K562 (cell line): ENCODE measurements at regions of chr11 and their contacts with region 1.

Region 1: GRCh38 chr11:75100314-75100713 is 3.6 kb upstream of the OR2AT4 start:
- DNase-seq: peak; percentile 62 to 90 (median 69)
- ATAC-seq: peak; percentile 78
- H3K4me3 ChIP-seq: peak overlapping the region; percentile 40
- H3K27ac ChIP-seq: peak overlapping the region; percentile 89
- H3K4me1 ChIP-seq: peaks cover 30 to 36% of the 10 kb centered on the region in 2 experiments; a peak in 4 of 5 replicates
- H3K27me3 ChIP-seq: no peaks in the 10 kb centered on the region
- CTCF ChIP-seq: no peak
- EP300 ChIP-seq: peak; percentile 73
- POLR2A ChIP-seq: peak; percentile 60
- RAD21 ChIP-seq: peak in 1 of 2 experiments; percentile 17; a peak in 2 of 4 replicates

Region 2: GRCh38 chr11:74860743-74861142 is 239.6 kb before region 1 on chr11:
- CTCF ChIA-PET with region 1: no interaction called
- POLR2A ChIA-PET with region 1: no interaction called
- in situ Hi-C with region 1: no loop called
- intact Hi-C with region 1: no loop called
- DNase-seq: no peak
- ATAC-seq: no peak
- H3K4me3 ChIP-seq: no peak overlapping the region
- H3K27ac ChIP-seq: no peak overlapping the region
- H3K4me1 ChIP-seq: no peaks in the 10 kb centered on the region
- H3K27me3 ChIP-seq: no peaks in the 10 kb centered on the region
- CTCF ChIP-seq: no peak
- EP300 ChIP-seq: no peak
- POLR2A ChIP-seq: no peak
- RAD21 ChIP-seq: no peak

Region 3: DNA sequence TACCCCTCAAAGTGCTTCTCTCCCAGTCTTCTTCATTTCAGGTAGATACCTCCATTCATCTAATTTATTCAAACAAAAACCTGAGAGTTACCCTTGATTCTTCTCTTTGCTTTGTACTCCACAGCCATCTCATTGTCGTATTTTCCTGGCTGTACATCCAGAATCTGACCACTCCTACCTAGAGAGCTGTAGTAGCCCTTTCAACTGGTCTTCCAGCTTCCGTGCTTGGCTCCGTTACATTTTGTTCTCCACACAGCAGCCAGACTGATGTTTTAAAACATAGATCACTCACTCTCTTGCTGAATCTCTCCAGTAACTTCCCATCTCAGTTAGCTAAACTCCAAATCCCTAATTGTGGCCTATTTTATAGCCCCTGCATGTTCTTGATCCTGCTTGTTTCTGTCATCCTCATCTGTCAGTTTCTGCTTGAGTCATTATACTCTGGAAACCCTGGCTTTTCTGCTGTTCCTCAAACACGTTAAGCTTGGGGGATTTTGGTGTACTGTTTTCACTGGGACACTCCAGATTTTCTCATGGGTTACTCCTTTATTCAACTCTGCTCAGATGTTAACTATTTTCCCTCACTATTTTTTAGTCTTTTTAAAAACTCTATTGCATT is 143.8 kb before region 1 on chr11:
- CTCF ChIA-PET with region 1: no interaction called
- POLR2A ChIA-PET with region 1: no interaction called
- in situ Hi-C with region 1: no loop called
- intact Hi-C with region 1: no loop called
- DNase-seq: no peak
- ATAC-seq: no peak
- H3K4me3 ChIP-seq: no peak overlapping the region
- H3K27ac ChIP-seq: peak overlapping the region; percentile 16; the same call in 2 of the 3 replicates
- H3K4me1 ChIP-seq: peaks cover 7 to 31% of the 10 kb centered on the region in 2 experiments; a peak in 3 of 5 replicates
- H3K27me3 ChIP-seq: no peaks in the 10 kb centered on the region
- CTCF ChIP-seq: no peak
- EP300 ChIP-seq: no peak
- POLR2A ChIP-seq: no peak
- RAD21 ChIP-seq: no peak

Region 4: GRCh38 chr11:75031771-75032549 is 68.4 kb before region 1 on chr11:
- CTCF ChIA-PET with region 1: interaction called, 4 read pairs
- POLR2A ChIA-PET with region 1: interaction called, 3 read pairs
- in situ Hi-C with region 1: no loop called
- intact Hi-C with region 1: loop called (anchors 2 kb)
- DNase-seq: peak; percentile 76 to 91 (median 80)
- ATAC-seq: peak; percentile 82
- H3K4me3 ChIP-seq: no peak overlapping the region
- H3K27ac ChIP-seq: peak overlapping the region; percentile 75
- H3K4me1 ChIP-seq: peaks cover 29 to 51% of the 10 kb centered on the region in 2 experiments
- H3K27me3 ChIP-seq: no peaks in the 10 kb centered on the region
- CTCF ChIP-seq: peak; percentile 79 to 87 (median 80)
- EP300 ChIP-seq: no peak
- POLR2A ChIP-seq: no peak
- RAD21 ChIP-seq: peak in 1 of 2 experiments; percentile 83; a peak in 3 of 4 replicates

Region 5: GRCh38 chr11:75142714-75143419 is 42.6 kb after region 1 on chr11:
- CTCF ChIA-PET with region 1: no interaction called
- POLR2A ChIA-PET with region 1: interaction called, 3 read pairs
- in situ Hi-C with region 1: no loop called
- intact Hi-C with region 1: loop called (anchors 5 kb)
- DNase-seq: peak; percentile 84 to 91 (median 88)
- ATAC-seq: peak; percentile 86
- H3K4me3 ChIP-seq: no peak overlapping the region
- H3K27ac ChIP-seq: peak overlapping the region; percentile 33; the same call in 1 of the 3 replicates
- H3K4me1 ChIP-seq: peaks cover 22 to 32% of the 10 kb centered on the region in 2 experiments
- H3K27me3 ChIP-seq: no peaks in the 10 kb centered on the region
- CTCF ChIP-seq: 0 out of 6 replicates have a peak, but pooled peaks of 1 of the 3 experiments have one; percentile 2
- EP300 ChIP-seq: 0 out of 2 replicates have a peak, but pooled peaks have one; percentile 23
- POLR2A ChIP-seq: no peak
- RAD21 ChIP-seq: no peak